Dendritic cell treated with granulocyte-macrophage colony-stimulating factor and Interleukin-4, amounts not matched to agents 40 ng/mL and 50 ng/mL, for 4 days (primary cell): ENCODE measurements at regions of chr12 and their contacts with region 1.

Region 1: DNA sequence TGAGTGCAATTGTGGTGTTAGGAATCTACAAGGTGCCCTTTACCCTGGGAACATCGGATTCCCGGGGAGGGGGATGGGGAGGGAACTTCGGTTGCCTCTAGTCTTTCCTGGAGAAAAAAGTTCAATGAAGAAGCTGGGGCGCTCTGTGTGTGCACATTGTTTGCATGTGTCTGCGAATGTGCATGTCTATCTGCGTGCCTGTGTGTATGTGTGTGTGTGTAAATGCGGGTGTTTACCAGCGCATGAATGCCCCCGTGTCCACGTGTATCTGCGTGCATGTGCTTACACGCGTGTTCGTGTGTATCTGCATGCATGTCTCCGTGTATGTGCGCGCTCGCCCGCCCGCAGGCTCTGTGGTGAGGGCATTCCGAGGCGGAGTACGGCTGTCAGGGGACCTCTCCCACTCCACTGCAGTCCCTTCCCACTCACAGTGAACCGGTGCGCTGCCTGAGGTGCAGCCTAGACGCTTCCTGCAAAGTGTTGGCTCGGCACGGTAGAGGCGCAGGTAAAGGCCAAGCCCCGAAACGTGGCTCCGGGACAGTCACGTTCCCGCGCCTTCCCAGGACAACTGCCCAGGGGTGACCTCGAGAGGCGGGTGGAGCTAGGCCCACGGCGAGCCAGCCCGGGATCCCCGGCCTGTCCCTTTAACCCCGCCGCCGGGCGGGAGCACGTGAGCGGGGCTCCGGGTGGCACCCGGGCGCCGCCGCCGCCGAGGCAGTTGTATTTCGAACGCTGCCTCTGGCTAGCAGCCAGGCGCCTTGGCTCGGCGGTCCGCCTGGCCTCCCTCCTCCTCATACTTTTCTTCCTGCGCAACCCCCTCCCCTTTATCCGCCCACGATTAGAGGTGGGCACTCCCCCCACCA is 539 bp upstream of the HMGA2 start:
- H3K4me3 Mint-ChIP-seq: peak overlapping the region; percentile 82
- H3K27ac Mint-ChIP-seq: no peak overlapping the region
- H3K4me1 Mint-ChIP-seq: peaks cover 34% of the 10 kb centered on the region
- H3K27me3 Mint-ChIP-seq: peaks cover 59% of the 10 kb centered on the region

Region 2: GRCh38 chr12:65615118-65615517 is 208.6 kb before region 1 on chr12:
- intact Hi-C with region 1: no loop called
- H3K4me3 Mint-ChIP-seq: no peak overlapping the region
- H3K27ac Mint-ChIP-seq: no peak overlapping the region
- H3K4me1 Mint-ChIP-seq: peaks cover 5% of the 10 kb centered on the region
- H3K27me3 Mint-ChIP-seq: peaks cover 10% of the 10 kb centered on the region

Region 3: GRCh38 chr12:65881965-65882413 is 58.2 kb after region 1 on chr12:
- intact Hi-C with region 1: loop called (anchors 5 kb)
- H3K4me3 Mint-ChIP-seq: peak overlapping the region; percentile 72
- H3K27ac Mint-ChIP-seq: peak overlapping the region; percentile 62
- H3K4me1 Mint-ChIP-seq: peaks cover 27% of the 10 kb centered on the region
- H3K27me3 Mint-ChIP-seq: peaks cover 9% of the 10 kb centered on the region